Spleen (tissue), 13 donors: ENCODE measurements at regions of chr15 and their contacts with region 1.

Region 1: GRCh38 chr15:92714477-92715401 is 59.2 kb upstream of the FAM174B start:
- DNase-seq: peak; percentile 87
- H3K4me3 ChIP-seq: peak overlapping the region; percentile 26 to 74 (median 56)
- H3K27ac ChIP-seq: peak overlapping the region in 5 of 8 donors; percentile 16 to 55 (median 41)
- H3K4me1 ChIP-seq: peaks cover 0 to 18% (median 13%) of the 10 kb centered on the region in 6 donors
- H3K27me3 ChIP-seq: peaks cover 0 to 58% (median 3%) of the 10 kb centered on the region in 7 donors
- CTCF ChIP-seq: peak; percentile 38 to 87 (median 75)
- POLR2A ChIP-seq: no peak

Region 2: GRCh38 chr15:92097474-92098178 is 617.1 kb before region 1 on chr15:
- intact Hi-C with region 1: loop called (anchors 5 kb)
- DNase-seq: no peak
- H3K4me3 ChIP-seq: no peak overlapping the region
- H3K27ac ChIP-seq: no peak overlapping the region
- H3K4me1 ChIP-seq: peaks cover 0 to 81% (median 25%) of the 10 kb centered on the region in 6 donors
- H3K27me3 ChIP-seq: no peaks in the 10 kb centered on the region
- CTCF ChIP-seq: peak; percentile 44 to 85 (median 65)
- POLR2A ChIP-seq: no peak

Region 3: GRCh38 chr15:92277776-92278175 is 437.0 kb before region 1 on chr15:
- intact Hi-C with region 1: loop called (anchors 10 kb)
- DNase-seq: no peak
- H3K4me3 ChIP-seq: no peak overlapping the region
- H3K27ac ChIP-seq: no peak overlapping the region
- H3K4me1 ChIP-seq: no peaks in the 10 kb centered on the region
- H3K27me3 ChIP-seq: peaks cover 0 to 8% (median 0%) of the 10 kb centered on the region in 7 donors
- CTCF ChIP-seq: peak in 2 of 11 experiments; percentile 20 to 32
- POLR2A ChIP-seq: no peak

Region 4: DNA sequence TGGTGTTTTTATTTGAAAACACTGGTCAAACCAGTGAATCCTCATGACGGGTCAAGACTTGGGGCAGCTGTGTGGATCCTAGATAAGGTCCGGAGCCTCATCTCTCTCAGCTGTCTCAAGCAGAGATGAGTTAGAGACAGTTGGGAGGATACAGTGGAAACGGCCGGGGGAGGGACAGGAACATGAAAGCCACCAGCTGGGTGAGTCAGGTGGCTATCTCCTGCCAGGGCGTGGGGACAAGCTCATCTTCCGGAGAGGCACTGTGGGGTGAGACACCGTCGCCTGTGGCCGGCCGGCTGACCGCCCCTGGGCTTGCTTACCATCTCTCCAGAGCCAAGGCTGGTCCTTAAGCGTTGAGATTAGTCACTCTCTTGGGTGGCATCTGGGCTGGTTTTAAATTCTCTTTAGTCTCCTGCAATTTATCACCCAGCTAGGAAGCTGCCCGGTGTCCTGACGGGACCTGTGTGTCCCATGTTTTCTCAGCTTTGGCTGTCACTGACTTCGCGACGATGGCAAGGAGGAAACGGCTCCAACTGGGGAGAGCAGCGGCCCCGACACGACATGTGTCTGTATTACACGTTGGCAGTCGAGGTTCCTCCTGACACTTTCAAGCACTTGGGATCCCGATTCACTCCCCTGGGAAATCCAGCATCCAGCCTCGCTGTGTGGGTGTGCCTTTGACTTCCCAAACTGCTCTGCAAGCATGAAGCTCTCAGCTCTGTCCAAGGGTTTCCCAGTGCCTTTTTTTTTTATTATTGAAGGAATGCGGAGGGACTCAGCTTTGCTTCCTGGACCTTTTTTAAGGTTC is 313.6 kb before region 1 on chr15:
- intact Hi-C with region 1: no loop called
- DNase-seq: no peak
- H3K4me3 ChIP-seq: no peak overlapping the region
- H3K27ac ChIP-seq: no peak overlapping the region
- H3K4me1 ChIP-seq: no peaks in the 10 kb centered on the region
- H3K27me3 ChIP-seq: peaks cover 0 to 73% (median 13%) of the 10 kb centered on the region in 7 donors
- CTCF ChIP-seq: no peak
- POLR2A ChIP-seq: no peak

Region 5: DNA sequence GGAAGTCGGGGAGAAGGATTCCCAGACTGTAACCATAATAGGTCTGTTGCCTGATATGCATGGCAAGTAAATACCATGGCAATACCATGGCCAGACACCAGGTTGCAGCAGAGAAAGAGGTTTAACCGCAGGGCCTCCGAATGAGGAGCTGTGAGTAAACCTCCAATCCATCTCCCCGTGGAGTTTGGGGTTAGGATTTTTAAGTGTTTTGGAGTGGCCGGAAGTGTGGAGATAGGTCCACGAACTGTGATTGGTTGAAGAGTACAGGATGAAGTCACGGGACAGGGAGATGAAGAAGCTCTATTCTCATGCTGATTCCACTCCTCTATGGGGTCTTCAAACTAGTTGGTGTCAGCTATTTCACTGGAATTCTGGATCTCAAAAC is 193.1 kb before region 1 on chr15:
- intact Hi-C with region 1: loop called (anchors 5 kb)
- DNase-seq: no peak
- H3K4me3 ChIP-seq: no peak overlapping the region
- H3K27ac ChIP-seq: no peak overlapping the region
- H3K4me1 ChIP-seq: peaks cover 0 to 6% (median 0%) of the 10 kb centered on the region in 6 donors
- H3K27me3 ChIP-seq: no peaks in the 10 kb centered on the region
- CTCF ChIP-seq: peak; percentile 26 to 75 (median 63)
- POLR2A ChIP-seq: no peak

Region 6: GRCh38 chr15:92899948-92900708 is 185.4 kb after region 1 on chr15 and contains the start of gene CHD2:
- intact Hi-C with region 1: no loop called
- DNase-seq: peak; percentile 87
- H3K4me3 ChIP-seq: peak within 1 kb of the TSS; percentile 58 to 83 (median 62)
- H3K27ac ChIP-seq: peak within 1 kb of the TSS; percentile 95 to 99 (median 98)
- H3K4me1 ChIP-seq: peaks cover 27 to 85% (median 70%) of the 10 kb centered on the region in 6 donors
- H3K27me3 ChIP-seq: no peaks in the 10 kb centered on the region
- CTCF ChIP-seq: peak in 1 of 11 experiments; percentile 18
- POLR2A ChIP-seq: peak; percentile 79 to 98 (median 95)
- total RNA-seq, gene CHD2: 160 to 232 (median 204) TPM